ENCODE measurements at regions of chr11 and their contacts with region 1.

Region 1: DNA sequence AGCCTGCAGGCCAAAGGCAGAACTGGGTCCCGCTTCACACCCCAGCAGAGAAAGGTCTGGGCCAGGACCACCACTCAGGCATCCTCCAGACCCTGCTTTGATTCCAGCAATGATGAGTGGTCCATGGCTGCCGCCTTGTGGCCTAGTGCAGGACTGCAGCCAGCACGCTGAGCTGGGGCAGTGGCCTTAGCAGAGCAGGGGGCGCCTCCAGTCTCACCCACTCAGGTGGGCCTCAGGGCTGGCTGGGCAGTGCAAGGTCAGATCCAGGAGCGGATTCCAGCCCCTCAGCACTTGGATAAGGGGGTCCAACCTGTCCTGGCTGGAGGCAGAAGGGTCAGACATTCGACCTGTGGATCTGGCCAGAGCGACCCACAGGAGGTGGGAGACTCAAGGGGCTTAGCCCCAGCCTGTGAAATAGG is 9.6 kb upstream of the PDE2A start:
- DNase-seq: peak; percentile 63
- ATAC-seq: peak; percentile 42 to 47

Region 2: GRCh38 chr11:72585762-72586311 is 98.0 kb before region 1 on chr11:
- intact Hi-C with region 1: loop called in 1 of 2 experiments (anchors 5 kb)
- DNase-seq: peak; percentile 69
- ATAC-seq: peak; percentile 66 to 69

Region 3: DNA sequence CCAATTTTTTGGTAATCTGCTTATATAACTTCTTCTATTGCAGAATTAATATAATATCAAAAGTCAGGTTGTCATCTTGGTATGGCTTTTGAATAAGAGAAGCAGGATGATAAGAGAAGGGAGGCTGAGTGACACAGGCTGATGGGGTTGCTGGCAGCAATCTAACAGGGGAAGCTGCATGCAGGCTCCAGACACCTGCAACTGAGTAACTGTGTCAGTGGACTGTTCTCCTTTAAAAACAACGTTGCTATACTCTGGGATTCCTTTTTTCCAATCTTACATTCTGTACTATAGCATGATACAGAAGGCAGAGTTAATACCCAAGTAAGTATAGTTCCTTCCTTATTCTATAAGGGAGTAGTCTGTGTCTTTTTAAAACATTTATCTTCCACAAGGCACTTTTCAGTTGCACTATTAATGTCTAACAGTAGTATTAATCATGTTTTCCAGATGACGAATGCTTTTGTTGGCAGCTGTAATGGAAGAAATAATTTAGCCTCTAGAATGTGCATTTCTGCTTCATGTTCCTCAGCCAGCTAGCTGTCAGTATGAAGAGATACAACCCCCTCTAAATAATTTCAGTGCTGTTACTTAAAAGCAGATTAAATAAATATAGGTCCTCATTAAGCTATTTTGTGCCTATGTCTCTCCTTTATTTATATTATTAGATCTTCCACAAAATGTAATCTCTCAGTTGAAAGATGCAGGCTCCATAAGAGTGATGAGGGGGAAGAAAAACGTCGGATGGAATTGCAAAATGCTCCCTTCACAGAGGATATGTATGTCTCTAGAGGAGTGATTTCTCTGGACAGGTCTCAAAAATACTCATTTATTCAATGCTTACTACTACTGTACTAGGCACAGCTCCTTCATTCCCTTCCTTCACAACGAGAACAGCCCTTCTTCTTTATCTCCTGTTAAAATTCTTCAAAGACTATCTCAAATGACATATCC is 181.2 kb after region 1 on chr11:
- intact Hi-C with region 1: no loop called
- DNase-seq: peak; percentile 34
- ATAC-seq: peak; percentile 84 to 88